ENCODE measurements at regions of chr10 and their contacts with region 1.

Region 1: DNA sequence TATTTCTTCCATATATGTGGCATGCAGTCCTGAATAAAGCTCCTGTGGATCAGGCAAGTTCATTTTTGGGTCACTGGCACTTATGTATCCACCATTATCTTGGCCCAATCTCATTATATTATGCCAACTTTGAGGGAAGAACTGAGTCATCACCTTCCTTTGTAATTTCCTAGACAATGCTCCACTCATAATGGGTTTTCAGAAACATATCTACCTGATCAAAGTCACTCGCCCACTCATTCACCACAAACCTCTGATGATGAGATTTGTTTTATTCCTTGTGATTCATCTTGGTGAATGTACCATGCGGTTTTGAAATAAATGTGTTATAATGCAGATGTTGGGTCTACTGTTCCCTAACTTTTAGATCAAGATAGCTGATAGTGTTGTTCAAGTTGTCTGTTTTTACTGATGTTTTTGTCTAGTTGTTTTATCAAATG is 525.8 kb downstream of the KIF20B start:
- DNase-seq: peak; percentile 82
- H3K4me3 Mint-ChIP-seq: no peak overlapping the region
- H3K27ac Mint-ChIP-seq: no peak overlapping the region
- H3K4me1 Mint-ChIP-seq: peaks cover 13% of the 10 kb centered on the region
- H3K27me3 Mint-ChIP-seq: peaks cover 26% of the 10 kb centered on the region

Region 2: GRCh38 chr10:90319188-90319914 is 92.1 kb after region 1 on chr10:
- CTCF ChIA-PET with region 1: no interaction called
- intact Hi-C with region 1: loop called (anchors 2 kb)
- DNase-seq: peak; percentile 21
- H3K4me3 Mint-ChIP-seq: no peak overlapping the region
- H3K27ac Mint-ChIP-seq: no peak overlapping the region
- H3K4me1 Mint-ChIP-seq: peaks cover 2% of the 10 kb centered on the region
- H3K27me3 Mint-ChIP-seq: peaks cover 2% of the 10 kb centered on the region

Region 3: DNA sequence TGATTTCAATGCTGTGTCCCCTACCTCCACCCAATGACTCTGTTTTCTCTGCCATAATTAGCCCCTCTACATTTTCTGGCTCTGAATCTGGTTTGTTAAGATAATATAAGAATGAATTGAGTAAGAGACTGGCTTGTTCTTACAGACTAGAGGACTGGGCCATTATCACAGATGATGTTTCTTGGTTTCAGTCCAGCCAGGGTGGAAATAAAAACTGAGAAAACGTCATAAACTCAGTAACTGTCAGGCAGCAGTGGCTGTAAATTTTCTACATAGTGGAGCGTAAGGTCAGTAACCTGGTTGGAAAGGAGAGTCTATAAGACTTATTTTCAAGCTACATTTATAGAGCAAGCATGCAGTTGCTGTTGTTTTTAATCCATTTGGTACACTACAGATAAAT is 145.2 kb after region 1 on chr10:
- CTCF ChIA-PET with region 1: no interaction called
- intact Hi-C with region 1: no loop called
- DNase-seq: no peak
- H3K4me3 Mint-ChIP-seq: no peak overlapping the region
- H3K27ac Mint-ChIP-seq: no peak overlapping the region
- H3K4me1 Mint-ChIP-seq: no peaks in the 10 kb centered on the region
- H3K27me3 Mint-ChIP-seq: no peaks in the 10 kb centered on the region

Measured in activated naive CD4-positive, alpha-beta T cell treated with anti-CD3 and anti-CD28 coated beads for 36 hours (primary cell).